A673 (cell line): ENCODE measurements at regions of chrX and their contacts with region 1.

Region 1: DNA sequence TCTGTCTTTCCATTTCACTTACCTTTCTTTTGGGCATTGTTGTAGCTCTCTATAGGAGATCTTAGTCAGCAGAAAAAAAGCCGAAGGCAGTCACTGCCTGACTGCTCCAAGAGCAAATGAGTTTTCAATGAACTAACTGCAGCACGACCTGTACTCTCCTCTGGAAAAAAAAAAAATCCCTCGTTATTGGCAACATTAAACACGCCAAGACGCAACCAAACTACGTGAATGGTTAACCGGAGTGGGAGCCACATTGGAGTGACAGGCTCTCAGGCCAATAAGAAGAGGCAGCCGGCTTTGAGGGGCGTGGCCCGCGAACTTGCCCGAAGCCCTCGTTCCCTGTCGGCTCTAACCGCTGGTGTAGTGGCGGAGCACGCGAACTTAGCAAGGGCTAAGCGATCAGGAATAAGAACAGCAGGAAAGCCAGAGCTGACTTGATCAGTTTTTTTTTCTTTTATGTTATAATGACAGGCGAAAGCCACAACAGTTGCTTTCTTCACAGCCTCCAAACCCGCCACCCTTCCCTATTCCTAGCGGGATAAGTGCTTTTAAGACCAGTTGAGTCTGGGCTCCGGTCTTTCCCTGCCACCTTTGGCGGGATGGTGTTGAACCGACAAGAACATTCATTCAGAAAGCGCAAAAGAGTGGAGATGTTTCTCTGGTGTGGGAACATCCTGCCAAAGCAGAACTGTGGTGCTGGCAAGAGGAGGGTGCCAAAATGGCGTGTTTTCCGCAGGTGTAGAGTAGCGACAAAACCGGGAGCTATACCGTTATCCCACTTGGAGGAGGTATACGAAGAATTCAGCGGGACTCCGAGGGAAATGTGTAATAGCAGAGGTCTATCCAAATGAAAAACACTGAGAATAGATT is 80.0 kb downstream of the HMGN5 start:
- DNase-seq: peak; percentile 93
- H3K4me3 ChIP-seq: peak overlapping the region; percentile 53
- H3K27ac ChIP-seq: peak overlapping the region; percentile 53
- H3K4me1 ChIP-seq: no peaks in the 10 kb centered on the region
- H3K27me3 ChIP-seq: peaks cover 15% of the 10 kb centered on the region
- CTCF ChIP-seq: no peak

Region 2: DNA sequence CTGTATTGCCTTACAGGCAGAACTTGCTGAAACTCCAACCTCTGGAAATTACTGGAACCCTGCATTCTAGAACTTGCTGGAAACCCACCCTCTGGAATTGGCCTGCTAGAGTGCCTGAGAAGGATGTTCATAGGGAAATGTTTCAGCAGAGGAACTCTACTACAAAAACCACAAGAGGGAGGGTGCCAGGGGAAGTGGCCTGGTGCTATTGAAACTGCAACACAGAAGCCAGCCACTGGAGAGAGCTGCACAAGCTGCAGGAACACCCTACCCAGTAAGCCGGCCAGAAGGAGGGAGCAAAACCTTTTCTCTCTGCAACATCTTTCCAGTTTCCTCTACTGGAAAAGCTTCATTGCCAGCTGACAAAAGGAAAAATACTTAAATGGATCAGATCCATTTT is 309.6 kb before region 1 on chrX:
- CTCF ChIA-PET with region 1: no interaction called
- POLR2A ChIA-PET with region 1: no interaction called
- intact Hi-C with region 1: loop called (anchors 10 kb)
- DNase-seq: peak; percentile 35
- H3K4me3 ChIP-seq: no peak overlapping the region
- H3K27ac ChIP-seq: no peak overlapping the region
- H3K4me1 ChIP-seq: no peaks in the 10 kb centered on the region
- H3K27me3 ChIP-seq: no peaks in the 10 kb centered on the region
- CTCF ChIP-seq: peak; percentile 34; the same call in 1 of the 2 replicates

Region 3: DNA sequence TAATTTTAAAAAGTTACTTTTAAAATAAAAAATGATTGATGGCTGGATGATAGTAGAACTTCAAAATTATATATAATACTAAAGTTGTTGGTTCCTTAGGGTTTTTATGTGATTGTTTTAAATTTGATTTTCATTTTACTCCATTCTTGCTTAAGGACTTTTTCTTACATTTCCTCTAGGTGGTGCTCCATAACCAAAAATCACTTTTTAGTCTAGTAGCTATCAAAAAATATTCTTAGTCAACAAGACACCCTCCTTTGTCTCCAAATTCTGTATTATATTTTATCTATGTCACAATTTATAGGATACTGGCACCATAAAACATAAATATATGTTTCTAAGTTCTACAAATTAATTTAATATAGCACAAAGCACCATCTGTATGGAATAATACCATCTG is 244.9 kb before region 1 on chrX:
- CTCF ChIA-PET with region 1: no interaction called
- POLR2A ChIA-PET with region 1: no interaction called
- intact Hi-C with region 1: loop called (anchors 2 kb)
- DNase-seq: peak; percentile 49
- H3K4me3 ChIP-seq: no peak overlapping the region
- H3K27ac ChIP-seq: no peak overlapping the region
- H3K4me1 ChIP-seq: no peaks in the 10 kb centered on the region
- H3K27me3 ChIP-seq: no peaks in the 10 kb centered on the region
- CTCF ChIP-seq: peak; percentile 58

Region 4: GRCh38 chrX:80929251-80929650 is 192.5 kb before region 1 on chrX:
- CTCF ChIA-PET with region 1: no interaction called
- POLR2A ChIA-PET with region 1: no interaction called
- intact Hi-C with region 1: no loop called
- DNase-seq: no peak
- H3K4me3 ChIP-seq: no peak overlapping the region
- H3K27ac ChIP-seq: no peak overlapping the region
- H3K4me1 ChIP-seq: no peaks in the 10 kb centered on the region
- H3K27me3 ChIP-seq: no peaks in the 10 kb centered on the region
- CTCF ChIP-seq: no peak

Region 5: DNA sequence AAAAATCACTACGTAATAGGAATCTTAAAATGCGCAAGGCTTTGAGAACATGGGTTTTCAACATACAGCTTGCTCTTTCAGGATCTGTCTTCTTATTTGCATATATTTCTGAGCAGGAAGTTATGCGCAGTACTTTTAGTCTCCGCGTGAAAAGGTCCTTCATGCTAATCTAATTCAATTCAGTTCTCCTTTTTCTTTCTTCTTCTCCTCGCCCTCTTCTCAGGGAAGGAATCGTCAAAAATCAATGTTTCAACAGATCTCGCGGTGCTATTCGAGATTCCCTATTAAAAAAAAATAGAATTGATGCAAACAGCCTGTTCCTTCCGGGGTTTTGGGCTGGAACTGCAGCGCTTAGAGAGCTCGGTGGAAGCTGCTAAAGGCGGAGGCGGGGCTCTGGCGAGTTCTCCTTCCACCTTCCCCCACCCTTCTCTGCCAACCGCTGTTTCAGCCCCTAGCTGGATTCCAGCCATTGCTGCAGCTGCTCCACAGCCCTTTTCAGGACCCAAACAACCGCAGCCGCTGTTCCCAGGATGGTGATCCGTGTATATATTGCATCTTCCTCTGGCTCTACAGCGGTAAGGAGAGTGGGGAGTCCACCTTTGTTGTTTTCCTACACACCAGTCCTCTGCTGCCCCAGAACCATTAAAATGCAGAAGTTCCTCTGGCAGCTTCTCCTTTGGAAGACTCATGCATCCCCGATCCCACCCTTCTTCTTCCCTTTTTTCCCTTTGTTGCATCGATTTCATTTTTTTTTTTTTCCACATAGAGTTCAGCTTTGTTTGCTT is 80.1 kb after region 1 on chrX and contains the starts of genes HMGN5 and SH3BGRL:
- CTCF ChIA-PET with region 1: no interaction called
- POLR2A ChIA-PET with region 1: no interaction called
- intact Hi-C with region 1: loop called (anchors 5 kb)
- DNase-seq: peak; percentile 89
- H3K4me3 ChIP-seq: peak within 1 kb of the TSS; percentile 59
- H3K27ac ChIP-seq: peak within 1 kb of the TSS; percentile 84
- H3K4me1 ChIP-seq: no peaks in the 10 kb centered on the region
- H3K27me3 ChIP-seq: no peaks in the 10 kb centered on the region
- CTCF ChIP-seq: no peak
- total RNA-seq, gene HMGN5: 17.9 and 19.8 TPM in 2 replicates
- total RNA-seq, gene SH3BGRL: 54.4 and 61.4 TPM in 2 replicates

Region 6: DNA sequence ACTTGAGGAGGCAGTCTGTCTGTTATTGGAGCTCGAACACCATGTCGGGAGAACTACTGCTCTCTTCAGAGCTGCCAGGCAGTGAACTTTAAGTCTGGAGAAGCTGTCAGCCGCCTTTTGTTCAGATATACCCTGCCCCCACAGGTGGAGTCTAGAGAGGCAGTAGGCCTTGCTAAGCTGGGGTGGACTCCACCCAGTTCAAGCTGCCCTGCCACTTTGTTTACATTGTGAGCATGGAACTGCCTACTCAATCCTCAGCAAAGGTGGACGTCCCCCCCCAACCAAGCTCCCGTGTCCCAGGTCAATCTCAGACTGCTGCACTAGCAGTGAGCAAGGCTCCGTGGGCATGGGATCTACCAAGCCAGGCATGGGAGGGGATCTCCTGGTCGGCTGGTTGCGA is 148.9 kb after region 1 on chrX:
- CTCF ChIA-PET with region 1: no interaction called
- POLR2A ChIA-PET with region 1: no interaction called
- intact Hi-C with region 1: no loop called
- DNase-seq: no peak
- H3K4me3 ChIP-seq: no peak overlapping the region
- H3K27ac ChIP-seq: no peak overlapping the region
- H3K4me1 ChIP-seq: no peaks in the 10 kb centered on the region
- H3K27me3 ChIP-seq: no peaks in the 10 kb centered on the region
- CTCF ChIP-seq: no peak